ENCODE measurements at regions of chr3 and their contacts with region 1.

Region 1: GRCh38 chr3:135487261-135487660 is 478.3 kb upstream of the PPP2R3A start:
- DNase-seq: no peak
- H3K4me3 ChIP-seq: no peak overlapping the region
- H3K27ac ChIP-seq: no peak overlapping the region
- H3K4me1 ChIP-seq: no peaks in the 10 kb centered on the region
- CTCF ChIP-seq: no peak

Region 2: GRCh38 chr3:134965865-134966481 is 521.3 kb before region 1 on chr3:
- CTCF ChIA-PET with region 1: no interaction called
- POLR2A ChIA-PET with region 1: interaction called, 12 read pairs
- intact Hi-C with region 1: no loop called
- DNase-seq: no peak
- H3K4me3 ChIP-seq: no peak overlapping the region
- H3K27ac ChIP-seq: no peak overlapping the region
- H3K4me1 ChIP-seq: no peaks in the 10 kb centered on the region
- CTCF ChIP-seq: no peak

Region 3: GRCh38 chr3:135499426-135499825 is 12.2 kb after region 1 on chr3:
- CTCF ChIA-PET with region 1: no interaction called
- POLR2A ChIA-PET with region 1: no interaction called
- intact Hi-C with region 1: no loop called
- DNase-seq: no peak
- H3K4me3 ChIP-seq: no peak overlapping the region
- H3K27ac ChIP-seq: no peak overlapping the region
- H3K4me1 ChIP-seq: no peaks in the 10 kb centered on the region
- CTCF ChIP-seq: no peak